ENCODE measurements at regions of chr12 and their contacts with region 1.

Region 1: GRCh38 chr12:113184900-113185773 is at the starts of genes DDX54 and RITA1:
- DNase-seq: peak; percentile 88 to 94
- ATAC-seq: peak; percentile 88 to 93 (median 90)
- H3K4me3 ChIP-seq: peak within 1 kb of the TSS; percentile 93
- H3K27ac ChIP-seq: peak within 1 kb of the TSS; percentile 98
- H3K4me1 ChIP-seq: peaks cover 20% of the 10 kb centered on the region
- H3K27me3 ChIP-seq: no peaks in the 10 kb centered on the region
- CTCF ChIP-seq: no peak
- total RNA-seq, gene DDX54: 61.9 to 93.5 (median 81.5) TPM
- total RNA-seq, gene RITA1: 13.0 to 19.4 (median 14.7) TPM

Region 2: GRCh38 chr12:113221181-113221997 is 36.3 kb after region 1 on chr12 and contains the start of gene TPCN1:
- intact Hi-C with region 1: loop called in 1 of 2 experiments (anchors 5 kb)
- DNase-seq: peak; percentile 100
- ATAC-seq: peak; percentile 91 to 95 (median 94)
- H3K4me3 ChIP-seq: peak within 1 kb of the TSS; percentile 88
- H3K27ac ChIP-seq: peak within 1 kb of the TSS; percentile 94
- H3K4me1 ChIP-seq: peaks cover 35% of the 10 kb centered on the region
- H3K27me3 ChIP-seq: no peaks in the 10 kb centered on the region
- CTCF ChIP-seq: no peak
- total RNA-seq, gene TPCN1: 24.9 to 36.2 (median 27.0) TPM

Region 3: DNA sequence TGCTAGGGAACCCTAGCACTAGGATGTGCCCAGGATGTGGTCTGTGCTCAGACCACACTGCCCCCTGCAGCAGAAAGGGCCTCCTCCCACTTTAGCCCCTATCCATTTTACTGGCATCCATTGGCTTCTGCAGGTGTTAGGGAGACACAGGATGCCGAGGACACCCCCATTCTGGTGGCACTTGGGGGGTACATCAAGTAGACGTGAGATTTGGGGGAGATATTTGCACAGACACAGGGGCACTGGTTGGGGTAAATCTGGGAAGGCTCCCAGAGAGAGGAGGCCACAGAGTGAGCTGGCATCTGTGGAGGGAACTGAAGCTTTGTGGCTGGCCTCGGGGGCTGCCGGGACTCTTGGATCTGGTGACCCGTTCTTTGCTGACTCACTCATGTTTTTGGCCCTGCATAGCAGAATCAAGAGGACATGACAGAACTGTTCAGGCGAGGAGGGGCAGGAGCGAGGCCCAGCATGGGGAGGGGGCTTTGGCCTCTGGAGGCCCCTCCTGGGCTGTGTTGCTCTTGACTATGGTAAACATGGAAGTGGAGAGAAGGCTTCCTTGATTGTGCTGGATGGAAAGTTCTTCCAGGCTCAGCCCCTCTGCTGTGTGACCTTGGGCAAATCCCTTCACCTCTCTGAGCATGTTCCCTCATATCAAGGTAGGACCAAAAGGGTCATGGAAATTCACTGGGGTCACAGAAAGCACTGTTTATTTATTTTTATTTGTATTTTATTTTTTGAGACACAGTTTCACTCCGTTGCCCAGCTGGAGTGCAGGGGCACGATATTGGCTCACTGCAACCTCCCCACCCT is 175.0 kb after region 1 on chr12:
- intact Hi-C with region 1: loop called in 1 of 2 experiments (anchors 10 kb)
- DNase-seq: peak in 1 of 2 donors; percentile 42
- ATAC-seq: no peak
- H3K4me3 ChIP-seq: peak overlapping the region; percentile 94
- H3K27ac ChIP-seq: peak overlapping the region; percentile 89
- H3K4me1 ChIP-seq: peaks cover 14% of the 10 kb centered on the region
- H3K27me3 ChIP-seq: no peaks in the 10 kb centered on the region
- CTCF ChIP-seq: no peak

Measured in psoas muscle (tissue), 8 donors.